Cardiac septum (tissue), 1 donor: ENCODE measurements at regions of chr4 and their contacts with region 1.

Region 1: DNA sequence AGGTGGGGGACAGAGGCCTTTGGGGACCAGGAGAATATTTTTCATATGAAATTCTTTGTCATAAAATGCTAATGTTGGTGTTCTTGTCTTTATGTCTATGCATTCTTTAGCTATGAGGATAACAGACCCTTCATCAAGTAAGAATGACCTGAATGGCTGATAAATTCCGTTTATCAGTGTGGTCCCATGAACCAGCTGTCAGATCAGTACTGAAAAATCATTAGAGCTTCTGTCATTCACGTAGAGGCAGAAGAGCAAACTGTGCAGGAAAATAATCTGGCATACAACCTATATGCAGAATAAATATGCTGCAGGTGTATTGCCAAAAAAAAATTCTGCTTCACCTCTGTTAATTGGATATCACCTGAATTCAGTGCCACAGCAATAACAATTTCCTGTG is 828.6 kb downstream of the ADGRL3 start:
- DNase-seq: no peak

Region 2: DNA sequence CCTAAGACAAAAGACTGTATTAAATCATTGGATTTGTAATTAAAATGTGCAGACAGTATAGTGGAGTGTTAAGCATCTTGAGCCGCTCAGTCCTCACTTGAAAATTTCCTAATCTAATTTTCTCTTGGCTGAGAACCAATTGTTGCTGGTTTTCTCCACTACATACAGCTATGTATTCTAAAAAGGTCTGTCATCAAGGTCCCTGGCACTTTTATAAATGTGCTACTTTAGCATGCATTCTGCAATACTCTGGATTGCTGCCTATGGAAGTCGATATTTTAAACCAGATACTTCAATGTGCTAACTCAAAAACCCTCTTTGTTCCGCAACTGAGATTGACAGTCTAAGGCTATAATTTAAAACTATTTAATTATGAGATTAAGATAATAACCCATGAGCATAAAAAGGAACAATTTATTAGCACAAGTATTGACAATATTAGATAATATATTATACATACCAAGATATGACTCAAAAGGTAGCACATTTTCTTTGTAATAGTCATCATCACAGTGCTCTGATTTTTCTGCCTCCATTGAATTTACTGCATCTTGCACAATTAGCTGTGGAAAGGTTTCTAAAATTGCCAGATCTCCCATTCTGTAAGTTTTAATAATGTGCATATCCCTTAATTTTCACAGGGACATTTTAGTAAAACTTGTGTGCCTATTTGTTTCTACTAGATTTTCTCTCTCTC is 13.6 kb before region 1 on chr4:
- intact Hi-C with region 1: loop called (anchors 2 kb)
- DNase-seq: no peak